Ascending aorta (tissue), 2 donors: ENCODE measurements at regions of chr11 and their contacts with region 1.

Region 1: DNA sequence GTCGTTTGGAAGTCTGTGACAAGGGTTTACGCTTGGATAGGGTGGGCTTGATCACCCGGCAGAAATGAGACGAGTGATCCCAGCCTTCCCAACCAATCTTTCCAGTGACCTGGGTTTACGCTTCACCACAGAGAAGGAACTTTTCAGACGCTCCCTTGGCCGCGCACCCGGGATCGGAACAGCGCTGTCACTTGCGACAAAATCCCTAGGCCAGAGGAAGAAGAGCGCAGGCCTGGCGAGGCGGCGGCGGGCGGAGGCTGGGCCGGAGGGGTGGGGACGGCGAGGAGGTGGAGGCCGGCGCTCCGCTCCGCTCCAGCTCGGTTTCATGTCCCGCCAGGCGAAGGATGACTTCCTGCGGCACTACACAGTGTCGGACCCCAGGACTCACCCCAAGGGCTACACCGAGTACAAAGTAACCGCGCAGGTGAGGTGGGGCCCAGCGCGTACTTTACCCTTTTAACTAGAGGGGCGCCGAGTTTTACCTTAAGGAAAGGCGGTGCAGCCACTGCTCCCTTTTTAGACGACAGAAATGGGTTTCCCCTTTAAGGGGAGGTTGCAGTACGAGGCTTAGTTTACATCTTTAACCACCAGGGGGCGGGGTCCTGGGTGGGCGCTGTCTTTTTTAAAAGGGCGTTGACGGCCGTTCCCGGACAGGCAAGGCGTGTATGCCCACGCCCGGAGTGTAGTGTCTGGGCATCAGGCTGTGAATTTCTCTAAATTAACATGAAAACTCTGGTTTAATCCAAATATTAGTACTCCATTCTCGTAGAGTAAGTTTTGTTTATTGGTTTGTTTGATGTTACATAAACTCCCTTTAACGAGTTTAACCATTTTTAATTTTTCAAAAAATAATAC is at the start of gene SNX15:
- DNase-seq: peak; percentile 72 to 96
- H3K4me3 ChIP-seq: peak within 1 kb of the TSS; percentile 54 to 64
- H3K27ac ChIP-seq: peak within 1 kb of the TSS; percentile 66 to 83
- H3K4me1 ChIP-seq: peaks cover 4 to 11% of the 10 kb centered on the region in 2 donors
- H3K27me3 ChIP-seq: no peaks in the 10 kb centered on the region
- CTCF ChIP-seq: peak; percentile 61 to 85 (median 78)
- total RNA-seq, gene SNX15: 25.1 TPM

Region 2: GRCh38 chr11:64916775-64917662 is 110.4 kb before region 1 on chr11 and contains the start of gene ATG2A:
- intact Hi-C with region 1: loop called (anchors 1 kb)
- DNase-seq: peak; percentile 99 to 100
- H3K4me3 ChIP-seq: peak within 1 kb of the TSS; percentile 92 to 94
- H3K27ac ChIP-seq: peak within 1 kb of the TSS; percentile 75 to 76
- H3K4me1 ChIP-seq: peaks cover 6 to 19% of the 10 kb centered on the region in 2 donors
- H3K27me3 ChIP-seq: no peaks in the 10 kb centered on the region
- CTCF ChIP-seq: no peak
- total RNA-seq, gene ATG2A: 39.5 TPM

Region 3: GRCh38 chr11:64924102-64924851 is 103.2 kb before region 1 on chr11 and contains the start of gene PPP2R5B:
- intact Hi-C with region 1: loop called (anchors 1 kb)
- DNase-seq: peak; percentile 92 to 98
- H3K4me3 ChIP-seq: peak within 1 kb of the TSS; percentile 91 to 97
- H3K27ac ChIP-seq: peak within 1 kb of the TSS; percentile 89 to 96
- H3K4me1 ChIP-seq: peaks cover 10 to 21% of the 10 kb centered on the region in 2 donors
- H3K27me3 ChIP-seq: no peaks in the 10 kb centered on the region
- CTCF ChIP-seq: no peak
- total RNA-seq, gene PPP2R5B: 115 TPM

Region 4: GRCh38 chr11:65040847-65041621 is 13.6 kb after region 1 on chr11 and contains the start of gene SAC3D1:
- intact Hi-C with region 1: loop called (anchors 1 kb)
- DNase-seq: peak; percentile 62 to 94
- H3K4me3 ChIP-seq: peak within 1 kb of the TSS; percentile 82 to 95
- H3K27ac ChIP-seq: peak within 1 kb of the TSS; percentile 89
- H3K4me1 ChIP-seq: peaks cover 4 to 6% of the 10 kb centered on the region in 2 donors
- H3K27me3 ChIP-seq: no peaks in the 10 kb centered on the region
- CTCF ChIP-seq: no peak
- total RNA-seq, gene SAC3D1: 19.6 TPM

Region 5: DNA sequence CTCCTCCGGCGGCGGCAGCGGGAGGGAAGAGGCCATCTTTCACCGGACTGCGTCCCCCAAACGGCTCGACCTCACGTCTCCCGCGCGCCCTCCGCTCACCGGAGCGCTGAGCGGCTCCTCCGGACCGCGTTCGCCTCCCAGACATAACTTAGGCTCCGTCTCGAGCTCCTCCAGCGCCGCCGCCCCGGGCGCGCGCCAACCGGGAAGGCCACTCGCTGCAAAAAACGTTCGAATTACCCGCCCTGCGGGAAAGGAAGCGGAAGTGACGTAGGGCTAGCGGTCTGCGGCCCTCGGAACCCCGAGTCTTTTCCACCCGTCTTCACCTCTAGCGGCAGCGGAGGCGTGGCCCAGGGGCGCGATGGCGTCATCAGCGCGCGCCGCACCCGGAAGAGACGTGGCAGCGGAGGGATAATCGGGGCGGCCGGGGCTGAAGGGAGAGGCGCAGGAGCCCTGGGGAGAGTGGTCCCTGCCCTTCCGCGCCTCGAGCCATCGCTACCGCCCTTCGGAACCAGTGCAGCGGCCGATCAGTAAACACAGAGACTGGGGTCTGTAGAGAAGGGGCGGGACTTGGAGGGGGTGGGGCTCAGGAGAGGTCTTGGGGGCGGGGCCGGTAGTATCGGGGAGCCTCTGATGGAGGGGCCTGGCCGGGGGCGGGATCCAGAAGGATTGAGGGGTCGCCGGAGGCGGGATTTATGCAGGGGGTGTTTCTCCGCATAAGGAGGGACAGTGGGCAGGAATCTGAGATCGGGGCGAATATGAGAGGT is 56.6 kb after region 1 on chr11 and contains the starts of genes CDCA5 and ZFPL1:
- intact Hi-C with region 1: loop called (anchors 5 kb)
- DNase-seq: peak; percentile 77 to 97
- H3K4me3 ChIP-seq: peak within 1 kb of the TSS; percentile 85 to 90
- H3K27ac ChIP-seq: peak within 1 kb of the TSS; percentile 93 to 97
- H3K4me1 ChIP-seq: peaks cover 10% of the 10 kb centered on the region in 2 donors
- H3K27me3 ChIP-seq: no peaks in the 10 kb centered on the region
- CTCF ChIP-seq: no peak
- total RNA-seq, gene CDCA5: not detected
- total RNA-seq, gene ZFPL1: 93.6 TPM

Region 6: DNA sequence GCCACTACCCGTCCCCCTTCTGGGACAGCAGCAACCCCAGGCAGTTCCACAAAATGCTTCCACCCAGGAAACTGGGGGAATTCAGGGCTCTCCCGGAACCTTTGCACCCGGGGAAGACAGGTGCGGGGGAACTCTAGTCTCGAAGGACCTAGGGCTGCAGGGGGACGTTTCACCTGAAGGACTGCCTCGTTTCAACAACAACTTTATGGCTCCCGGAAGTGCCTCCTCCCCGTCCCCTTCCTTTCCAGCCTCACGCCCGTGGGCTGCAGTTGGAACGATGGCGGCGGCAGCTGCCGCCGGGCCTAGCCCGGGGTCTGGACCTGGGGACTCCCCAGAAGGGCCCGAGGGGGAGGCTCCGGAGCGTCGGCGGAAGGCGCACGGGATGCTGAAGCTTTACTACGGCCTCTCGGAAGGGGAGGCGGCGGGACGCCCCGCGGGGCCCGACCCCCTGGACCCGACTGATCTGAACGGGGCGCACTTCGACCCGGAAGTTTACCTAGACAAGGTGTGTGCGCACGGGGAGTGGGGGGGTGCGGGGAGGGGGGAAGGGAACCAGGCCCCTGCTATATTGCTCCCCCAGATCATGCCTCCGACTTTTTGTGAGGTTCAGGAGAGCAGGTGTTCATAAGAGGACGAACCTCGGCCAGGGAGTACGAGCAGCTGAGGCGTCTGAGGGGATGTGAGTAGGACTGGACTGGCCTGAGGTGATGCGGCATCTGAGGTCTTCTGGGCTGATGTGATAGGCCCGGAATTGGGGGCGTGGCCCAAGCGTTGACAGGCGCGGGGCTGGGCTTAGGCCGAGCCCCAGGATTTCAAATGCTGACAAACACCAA is 68.8 kb after region 1 on chr11 and contains the start of gene VPS51:
- intact Hi-C with region 1: loop called (anchors 2 kb)
- DNase-seq: peak; percentile 66 to 94
- H3K4me3 ChIP-seq: peak within 1 kb of the TSS; percentile 73 to 80
- H3K27ac ChIP-seq: peak within 1 kb of the TSS; percentile 86 to 95
- H3K4me1 ChIP-seq: peaks cover 3 to 15% of the 10 kb centered on the region in 2 donors
- H3K27me3 ChIP-seq: no peaks in the 10 kb centered on the region
- CTCF ChIP-seq: peak in 1 of 3 experiments; percentile 20
- total RNA-seq, gene VPS51: 226 TPM

Region 7: GRCh38 chr11:65134386-65135253 is 107.2 kb after region 1 on chr11 and contains the start of gene SYVN1:
- intact Hi-C with region 1: loop called (anchors 1 kb)
- DNase-seq: peak; percentile 91 to 97
- H3K4me3 ChIP-seq: peak within 1 kb of the TSS; percentile 89 to 99
- H3K27ac ChIP-seq: peak within 1 kb of the TSS; percentile 95 to 99
- H3K4me1 ChIP-seq: peaks cover 11 to 24% of the 10 kb centered on the region in 2 donors
- H3K27me3 ChIP-seq: no peaks in the 10 kb centered on the region
- CTCF ChIP-seq: no peak
- total RNA-seq, gene SYVN1: 229 TPM